ENCODE measurements at regions of chr2 and their contacts with region 1.

Region 1: GRCh38 chr2:213238753-213239495 is 45.3 kb upstream of the SPAG16 start:
- DNase-seq: no peak
- ATAC-seq: no peak
- H3K4me3 Mint-ChIP-seq: peak overlapping the region; percentile 57
- H3K27ac Mint-ChIP-seq: peak overlapping the region; percentile 70
- H3K4me1 Mint-ChIP-seq: peaks cover 25% of the 10 kb centered on the region
- H3K27me3 Mint-ChIP-seq: no peaks in the 10 kb centered on the region
- CTCF ChIP-seq: no peak

Region 2: GRCh38 chr2:212863185-212863588 is 375.7 kb before region 1 on chr2:
- CTCF ChIA-PET with region 1: interaction called, 3 read pairs
- POLR2A ChIA-PET with region 1: no interaction called
- intact Hi-C with region 1: loop called (anchors 5 kb)
- DNase-seq: peak; percentile 61
- ATAC-seq: peak; percentile 74
- H3K4me3 Mint-ChIP-seq: no peak overlapping the region
- H3K27ac Mint-ChIP-seq: no peak overlapping the region
- H3K4me1 Mint-ChIP-seq: no peaks in the 10 kb centered on the region
- H3K27me3 Mint-ChIP-seq: no peaks in the 10 kb centered on the region
- CTCF ChIP-seq: peak; percentile 81

Region 3: GRCh38 chr2:213015387-213016165 is 223.3 kb before region 1 on chr2:
- CTCF ChIA-PET with region 1: no interaction called
- POLR2A ChIA-PET with region 1: no interaction called
- intact Hi-C with region 1: loop called (anchors 10 kb)
- DNase-seq: peak; percentile 87
- ATAC-seq: peak; percentile 83
- H3K4me3 Mint-ChIP-seq: peak overlapping the region; percentile 40
- H3K27ac Mint-ChIP-seq: peak overlapping the region; percentile 72
- H3K4me1 Mint-ChIP-seq: peaks cover 46% of the 10 kb centered on the region
- H3K27me3 Mint-ChIP-seq: peaks cover 9% of the 10 kb centered on the region
- CTCF ChIP-seq: no peak

Region 4: DNA sequence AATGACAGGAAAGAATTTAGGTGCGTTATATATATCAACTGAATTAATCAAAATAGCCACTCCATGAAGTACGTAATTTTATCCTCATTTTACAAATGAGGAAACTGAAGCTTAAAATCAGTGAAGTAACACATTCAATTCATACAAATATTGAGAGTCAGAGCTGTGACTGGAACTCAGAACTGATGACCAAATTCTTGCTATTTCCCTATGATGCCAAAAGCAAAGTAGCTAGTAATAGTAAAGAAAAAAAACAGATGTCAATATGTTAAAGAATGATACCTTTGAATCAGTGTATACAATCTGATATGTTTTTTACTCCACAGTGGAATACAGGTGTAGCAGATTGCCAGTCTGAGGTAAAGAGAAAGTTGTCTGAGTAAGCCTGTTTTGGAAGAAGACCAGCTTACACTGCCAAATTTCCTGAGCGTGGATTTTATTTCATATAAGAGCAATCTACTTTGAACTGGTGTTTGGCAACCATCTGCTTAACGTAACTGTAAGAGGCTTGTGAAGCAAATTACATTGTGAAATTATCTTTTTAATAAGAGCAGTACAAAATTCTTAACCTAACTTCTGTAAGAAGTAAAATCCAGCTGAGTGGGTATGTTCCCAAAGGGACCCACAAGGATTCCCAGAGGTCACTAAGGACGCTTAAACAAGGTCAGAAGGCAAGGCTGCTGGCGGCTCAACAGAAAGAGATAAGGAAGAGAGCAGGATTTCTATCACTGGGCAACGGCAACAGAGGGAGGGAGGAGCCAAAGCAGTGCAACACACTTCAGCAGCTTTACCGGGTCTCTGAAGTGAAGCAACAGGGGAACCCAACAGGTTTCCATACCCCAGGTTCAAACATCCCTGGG is 173.1 kb before region 1 on chr2:
- CTCF ChIA-PET with region 1: no interaction called
- POLR2A ChIA-PET with region 1: no interaction called
- intact Hi-C with region 1: no loop called
- DNase-seq: peak; percentile 39
- ATAC-seq: peak; percentile 73
- H3K4me3 Mint-ChIP-seq: peak overlapping the region; percentile 64
- H3K27ac Mint-ChIP-seq: peak overlapping the region; percentile 73
- H3K4me1 Mint-ChIP-seq: peaks cover 49% of the 10 kb centered on the region
- H3K27me3 Mint-ChIP-seq: no peaks in the 10 kb centered on the region
- CTCF ChIP-seq: no peak